Activated CD4-positive, alpha-beta T cell treated with anti-CD3 and anti-CD28 coated beads for 36 hours (primary cell): ENCODE measurements at regions of chr2 and their contacts with region 1.

Region 1: GRCh38 chr2:88669371-88670214 is 21.9 kb upstream of the RPIA start:
- DNase-seq: peak; percentile 43
- ATAC-seq: peak; percentile 71
- H3K4me3 Mint-ChIP-seq: no peak overlapping the region
- H3K27ac Mint-ChIP-seq: no peak overlapping the region
- H3K4me1 Mint-ChIP-seq: no peaks in the 10 kb centered on the region
- H3K27me3 Mint-ChIP-seq: peaks cover 3% of the 10 kb centered on the region

Region 2: GRCh38 chr2:88190808-88191721 is 478.5 kb before region 1 on chr2:
- CTCF ChIA-PET with region 1: interaction called, 4 read pairs
- POLR2A ChIA-PET with region 1: no interaction called
- intact Hi-C with region 1: loop called in 1 of 2 experiments (anchors 5 kb)
- DNase-seq: peak; percentile 48
- ATAC-seq: no peak
- H3K4me3 Mint-ChIP-seq: no peak overlapping the region
- H3K27ac Mint-ChIP-seq: no peak overlapping the region
- H3K4me1 Mint-ChIP-seq: no peaks in the 10 kb centered on the region
- H3K27me3 Mint-ChIP-seq: peaks cover 22% of the 10 kb centered on the region

Region 3: GRCh38 chr2:88350331-88351248 is 319.0 kb before region 1 on chr2:
- CTCF ChIA-PET with region 1: no interaction called
- POLR2A ChIA-PET with region 1: no interaction called
- intact Hi-C with region 1: loop called in 1 of 2 experiments (anchors 5 kb)
- DNase-seq: peak; percentile 85
- ATAC-seq: peak; percentile 55
- H3K4me3 Mint-ChIP-seq: peak overlapping the region; percentile 40
- H3K27ac Mint-ChIP-seq: no peak overlapping the region
- H3K4me1 Mint-ChIP-seq: peaks cover 3% of the 10 kb centered on the region
- H3K27me3 Mint-ChIP-seq: peaks cover 32% of the 10 kb centered on the region

Region 4: GRCh38 chr2:88471083-88471942 is 198.3 kb before region 1 on chr2:
- CTCF ChIA-PET with region 1: no interaction called
- POLR2A ChIA-PET with region 1: no interaction called
- intact Hi-C with region 1: loop called in 1 of 2 experiments (anchors 10 kb)
- DNase-seq: no peak
- ATAC-seq: no peak
- H3K4me3 Mint-ChIP-seq: no peak overlapping the region
- H3K27ac Mint-ChIP-seq: no peak overlapping the region
- H3K4me1 Mint-ChIP-seq: no peaks in the 10 kb centered on the region
- H3K27me3 Mint-ChIP-seq: peaks cover 10% of the 10 kb centered on the region

Region 5: DNA sequence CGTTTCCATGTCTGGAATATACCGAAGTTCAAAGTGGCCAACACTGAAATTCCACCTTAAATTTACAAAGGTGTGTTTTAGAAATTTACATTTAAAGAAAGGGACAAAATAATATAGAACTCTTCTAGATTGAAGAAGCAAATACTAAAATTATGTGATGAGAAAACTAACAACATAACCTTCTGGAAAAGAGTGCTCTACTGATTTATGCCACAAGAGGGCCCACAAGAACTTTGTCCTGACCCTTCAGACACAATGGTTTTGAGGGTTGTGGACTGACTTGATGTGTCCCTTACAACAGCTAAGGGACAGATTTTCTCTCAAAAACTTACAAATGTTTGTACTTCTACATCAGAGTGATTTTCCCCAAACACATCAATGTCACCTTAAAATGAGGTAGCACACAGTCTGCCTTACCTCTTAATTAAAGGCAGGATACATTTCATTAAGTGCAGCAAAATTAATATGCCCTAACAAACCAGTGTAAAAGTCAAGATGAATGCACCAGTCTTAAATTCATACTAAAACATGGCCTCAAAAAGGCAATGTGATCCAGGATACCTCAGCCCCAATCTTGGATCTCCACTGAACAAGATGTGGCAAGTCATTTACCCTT is 78.5 kb before region 1 on chr2:
- CTCF ChIA-PET with region 1: interaction called, 125 read pairs
- POLR2A ChIA-PET with region 1: no interaction called
- intact Hi-C with region 1: loop called (anchors 1 kb)
- DNase-seq: peak; percentile 49
- ATAC-seq: peak; percentile 88
- H3K4me3 Mint-ChIP-seq: no peak overlapping the region
- H3K27ac Mint-ChIP-seq: no peak overlapping the region
- H3K4me1 Mint-ChIP-seq: no peaks in the 10 kb centered on the region
- H3K27me3 Mint-ChIP-seq: no peaks in the 10 kb centered on the region

Region 6: DNA sequence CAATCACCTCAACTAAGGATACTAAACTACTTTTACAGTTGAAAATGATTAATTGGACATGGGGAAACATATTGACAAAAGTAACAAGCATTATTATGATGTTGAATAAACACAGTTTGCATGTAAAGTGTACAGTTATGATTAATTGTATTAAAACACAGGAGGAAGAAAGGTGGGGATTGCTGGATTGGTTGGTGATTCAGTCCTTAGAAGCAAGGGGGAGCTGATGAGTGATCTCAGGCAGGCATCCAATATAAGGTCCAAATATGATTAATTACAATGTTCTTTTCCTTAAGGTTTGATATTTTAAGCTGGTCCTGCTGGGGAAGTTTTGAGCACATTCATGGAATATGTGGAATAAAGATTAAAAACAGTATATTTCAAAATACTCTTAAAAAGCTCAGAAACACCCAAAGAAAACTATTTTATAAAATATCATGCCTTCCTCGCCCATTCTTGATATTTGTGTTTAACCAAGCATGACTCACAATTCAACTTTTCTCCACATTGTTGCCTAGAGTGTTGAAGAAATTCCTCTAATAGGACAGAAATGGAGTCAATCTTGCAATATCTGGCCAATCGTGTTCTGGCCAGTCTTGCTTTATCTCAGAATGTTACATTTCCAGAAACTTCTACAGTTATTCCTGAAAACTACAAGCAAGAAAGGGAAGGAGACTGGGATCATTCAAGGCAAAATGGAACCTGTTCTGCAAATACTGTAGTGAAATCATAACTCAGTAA is 290.1 kb after region 1 on chr2:
- CTCF ChIA-PET with region 1: no interaction called
- POLR2A ChIA-PET with region 1: no interaction called
- intact Hi-C with region 1: no loop called
- DNase-seq: no peak
- ATAC-seq: no peak
- H3K4me3 Mint-ChIP-seq: no peak overlapping the region
- H3K27ac Mint-ChIP-seq: no peak overlapping the region
- H3K4me1 Mint-ChIP-seq: no peaks in the 10 kb centered on the region
- H3K27me3 Mint-ChIP-seq: peaks cover 12% of the 10 kb centered on the region